ENCODE measurements at regions of chr17 and their contacts with region 1.

Region 1: DNA sequence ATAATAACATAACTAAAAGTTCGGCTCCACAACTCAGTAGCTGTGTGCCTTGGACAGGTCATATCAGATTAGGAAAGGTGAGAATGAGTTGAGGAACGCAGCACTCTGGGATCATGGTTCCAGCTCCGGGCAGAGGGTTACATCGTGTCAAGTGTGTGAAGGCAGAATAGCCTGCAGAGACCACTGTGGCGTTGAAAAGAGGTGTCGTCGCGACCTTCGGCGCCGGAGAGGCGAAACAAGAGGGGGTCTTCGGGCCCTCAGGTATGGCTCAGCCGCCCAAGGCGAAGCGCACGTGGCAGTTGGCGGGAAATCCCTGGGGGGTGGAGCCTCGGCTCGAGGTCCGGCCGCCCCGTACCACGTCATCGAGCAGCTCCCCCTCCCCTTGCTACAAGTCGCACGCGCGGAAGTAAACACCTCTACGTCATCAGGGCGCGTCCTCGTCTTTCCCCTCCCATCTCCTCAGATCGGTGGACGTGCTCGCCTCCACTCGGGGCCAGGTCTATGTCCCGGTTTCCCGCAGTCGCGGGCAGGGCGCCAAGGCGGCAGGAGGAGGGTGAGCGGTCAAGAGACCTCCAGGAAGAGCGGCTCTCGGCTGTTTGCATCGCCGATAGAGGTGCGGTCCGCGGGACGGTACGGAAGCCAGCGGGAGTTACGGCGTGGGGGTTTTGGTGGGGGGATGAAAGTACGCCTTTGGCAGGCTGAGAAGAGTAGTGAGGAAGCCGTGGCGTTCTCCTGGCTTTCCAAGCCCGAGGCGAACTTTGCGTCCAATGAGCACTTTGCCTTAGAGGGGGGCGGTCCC is at the start of gene DHX40:
- DNase-seq: peak; percentile 88
- ATAC-seq: peak; percentile 91
- H3K4me3 Mint-ChIP-seq: peak within 1 kb of the TSS; percentile 100
- H3K27ac Mint-ChIP-seq: peak within 1 kb of the TSS; percentile 99
- H3K4me1 Mint-ChIP-seq: peaks cover 17% of the 10 kb centered on the region
- H3K27me3 Mint-ChIP-seq: no peaks in the 10 kb centered on the region
- CTCF ChIP-seq: no peak
- total RNA-seq, gene DHX40: 19.1 and 22.6 TPM in 2 replicates

Region 2: DNA sequence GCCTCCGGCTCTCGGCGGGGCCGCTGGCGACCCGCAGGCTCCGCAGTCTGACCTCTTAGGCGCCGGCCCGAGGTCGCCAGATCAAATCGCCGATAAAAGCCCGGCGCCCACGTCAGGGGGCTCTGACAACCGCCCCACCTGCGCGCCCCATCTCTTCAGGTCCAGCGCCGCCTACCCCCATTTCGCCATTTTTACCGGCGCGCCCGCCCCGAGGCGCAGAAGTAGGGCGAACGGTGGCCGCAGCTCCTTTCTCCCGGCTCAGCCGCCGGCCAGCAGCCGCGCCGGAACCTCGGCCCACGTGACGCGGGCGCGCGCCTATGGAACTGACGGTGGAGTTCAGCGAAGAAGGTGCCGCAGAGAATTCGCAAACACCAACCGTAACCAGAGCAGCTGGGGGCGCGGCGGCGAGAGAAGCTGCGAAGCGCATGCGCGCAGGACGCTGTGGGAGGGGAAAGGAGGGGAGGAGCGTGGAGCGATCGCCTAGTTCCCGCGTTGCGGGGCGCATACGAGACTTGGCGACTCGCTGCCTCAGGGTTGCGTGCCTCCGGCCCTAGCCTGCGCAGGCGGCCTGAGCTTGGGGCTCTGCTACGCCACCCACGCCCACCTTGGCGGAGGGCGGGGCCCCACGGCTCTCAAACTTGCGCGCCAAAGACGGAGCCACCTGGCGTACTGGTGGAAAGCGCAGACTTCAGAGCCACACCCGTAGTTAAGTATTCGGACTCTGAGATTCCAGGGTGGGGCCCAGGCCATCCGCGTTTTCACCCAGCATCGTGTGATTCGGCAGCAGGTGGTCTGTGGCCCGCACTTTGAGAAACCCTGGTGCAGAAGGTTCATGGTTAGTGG is 458.7 kb before region 1 on chr17 and contains the start of gene TRIM37:
- CTCF ChIA-PET with region 1: no interaction called
- POLR2A ChIA-PET with region 1: no interaction called
- intact Hi-C with region 1: loop called (anchors 2 kb)
- DNase-seq: peak; percentile 98
- ATAC-seq: peak; percentile 96
- H3K4me3 Mint-ChIP-seq: peak within 1 kb of the TSS; percentile 94
- H3K27ac Mint-ChIP-seq: peak within 1 kb of the TSS; percentile 82
- H3K4me1 Mint-ChIP-seq: peaks cover 28% of the 10 kb centered on the region
- H3K27me3 Mint-ChIP-seq: no peaks in the 10 kb centered on the region
- CTCF ChIP-seq: no peak
- total RNA-seq, gene TRIM37: 16.4 and 17.3 TPM in 2 replicates

Region 3: DNA sequence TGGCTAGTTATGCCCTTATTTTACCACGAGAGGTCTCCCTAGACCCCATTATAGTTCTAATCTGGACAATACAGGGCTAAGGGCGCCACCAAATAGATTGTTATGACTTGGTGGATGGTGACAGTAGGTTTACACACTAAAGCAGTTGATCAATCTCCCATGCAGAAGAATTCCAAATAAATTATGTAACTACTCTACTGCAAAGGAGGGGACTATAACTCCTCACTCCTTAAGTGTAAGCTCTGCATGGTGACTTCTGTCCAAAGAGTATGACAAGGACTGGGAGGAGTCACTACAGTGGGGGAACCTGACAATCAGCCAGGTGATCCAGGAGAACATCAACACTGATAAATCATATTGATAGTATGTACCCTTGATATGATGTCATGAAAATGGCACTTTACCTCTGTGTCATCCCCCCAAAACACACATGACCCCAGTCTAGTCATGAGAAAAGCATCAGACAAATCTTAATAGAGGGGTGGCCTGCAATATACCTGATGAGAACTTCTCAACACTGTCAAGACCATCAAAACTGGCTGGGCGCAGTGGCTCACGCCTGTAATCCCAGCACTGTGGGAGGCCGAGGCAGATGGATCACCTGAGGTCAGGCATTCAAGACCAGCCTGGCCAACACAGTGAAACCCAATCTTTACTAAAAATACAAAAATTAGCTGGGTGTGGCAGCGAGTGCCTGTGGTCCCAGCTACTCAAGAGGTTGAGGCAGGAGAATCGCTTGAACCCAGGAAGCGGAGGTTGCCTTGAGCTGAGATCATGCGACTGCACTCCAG is 254.0 kb before region 1 on chr17:
- CTCF ChIA-PET with region 1: no interaction called
- POLR2A ChIA-PET with region 1: no interaction called
- intact Hi-C with region 1: loop called (anchors 5 kb)
- DNase-seq: no peak
- ATAC-seq: peak; percentile 99
- H3K4me3 Mint-ChIP-seq: no peak overlapping the region
- H3K27ac Mint-ChIP-seq: no peak overlapping the region
- H3K4me1 Mint-ChIP-seq: no peaks in the 10 kb centered on the region
- H3K27me3 Mint-ChIP-seq: no peaks in the 10 kb centered on the region
- CTCF ChIP-seq: peak; percentile 86

Region 4: DNA sequence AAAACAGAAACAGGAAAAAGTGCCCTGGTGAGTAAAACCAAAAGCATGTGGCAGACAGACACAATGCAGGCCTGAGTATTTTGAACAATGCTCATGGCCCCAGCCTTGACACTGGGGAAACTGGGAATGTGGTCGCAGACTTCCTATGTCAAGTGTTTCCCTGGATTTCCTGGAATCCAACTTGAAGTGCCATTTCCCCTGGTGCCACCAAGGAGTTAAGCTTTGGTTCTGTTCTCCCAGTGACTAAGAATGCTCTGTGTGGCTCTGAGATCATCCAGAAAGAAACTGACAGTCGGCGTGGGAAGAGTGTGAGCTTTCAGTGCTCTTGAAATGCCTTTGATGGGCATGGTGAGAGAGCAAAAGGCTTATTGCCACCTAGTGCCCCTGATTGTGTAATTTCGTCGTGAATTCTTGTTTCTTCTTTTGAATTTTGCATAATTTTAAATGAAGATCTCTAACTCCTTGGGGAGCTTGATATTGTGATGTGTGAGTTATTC is 137.9 kb before region 1 on chr17:
- CTCF ChIA-PET with region 1: no interaction called
- POLR2A ChIA-PET with region 1: interaction called, 10 read pairs
- intact Hi-C with region 1: no loop called
- DNase-seq: no peak
- ATAC-seq: no peak
- H3K4me3 Mint-ChIP-seq: no peak overlapping the region
- H3K27ac Mint-ChIP-seq: no peak overlapping the region
- H3K4me1 Mint-ChIP-seq: no peaks in the 10 kb centered on the region
- H3K27me3 Mint-ChIP-seq: no peaks in the 10 kb centered on the region
- CTCF ChIP-seq: no peak

Region 5: GRCh38 chr17:59601130-59601529 is 35.8 kb after region 1 on chr17:
- CTCF ChIA-PET with region 1: no interaction called
- POLR2A ChIA-PET with region 1: no interaction called
- intact Hi-C with region 1: no loop called
- DNase-seq: no peak
- ATAC-seq: no peak
- H3K4me3 Mint-ChIP-seq: no peak overlapping the region
- H3K27ac Mint-ChIP-seq: no peak overlapping the region
- H3K4me1 Mint-ChIP-seq: no peaks in the 10 kb centered on the region
- H3K27me3 Mint-ChIP-seq: no peaks in the 10 kb centered on the region
- CTCF ChIP-seq: no peak

Region 6: GRCh38 chr17:59707114-59707970 is 142.0 kb after region 1 on chr17 and contains the starts of genes PTRH2 and VMP1:
- CTCF ChIA-PET with region 1: no interaction called
- POLR2A ChIA-PET with region 1: interaction called, 13 read pairs
- intact Hi-C with region 1: loop called (anchors 5 kb)
- DNase-seq: peak; percentile 79
- ATAC-seq: peak; percentile 95
- H3K4me3 Mint-ChIP-seq: peak within 1 kb of the TSS; percentile 99
- H3K27ac Mint-ChIP-seq: peak within 1 kb of the TSS; percentile 97
- H3K4me1 Mint-ChIP-seq: peaks cover 72% of the 10 kb centered on the region
- H3K27me3 Mint-ChIP-seq: no peaks in the 10 kb centered on the region
- CTCF ChIP-seq: no peak
- total RNA-seq, gene PTRH2: 27.0 and 29.9 TPM in 2 replicates
- total RNA-seq, gene VMP1: 158 and 176 TPM in 2 replicates

Region 7: GRCh38 chr17:59892924-59893676 is 327.7 kb after region 1 on chr17 and contains the starts of genes RPS6KB1 and TUBD1:
- CTCF ChIA-PET with region 1: no interaction called
- POLR2A ChIA-PET with region 1: no interaction called
- intact Hi-C with region 1: loop called (anchors 1 kb)
- DNase-seq: peak; percentile 86
- ATAC-seq: peak; percentile 91
- H3K4me3 Mint-ChIP-seq: peak within 1 kb of the TSS; percentile 99
- H3K27ac Mint-ChIP-seq: peak within 1 kb of the TSS; percentile 98
- H3K4me1 Mint-ChIP-seq: peaks cover 44% of the 10 kb centered on the region
- H3K27me3 Mint-ChIP-seq: no peaks in the 10 kb centered on the region
- CTCF ChIP-seq: no peak
- total RNA-seq, gene RPS6KB1: 57.7 and 63.0 TPM in 2 replicates
- total RNA-seq, gene TUBD1: 10.5 and 15.1 TPM in 2 replicates

Region 8: DNA sequence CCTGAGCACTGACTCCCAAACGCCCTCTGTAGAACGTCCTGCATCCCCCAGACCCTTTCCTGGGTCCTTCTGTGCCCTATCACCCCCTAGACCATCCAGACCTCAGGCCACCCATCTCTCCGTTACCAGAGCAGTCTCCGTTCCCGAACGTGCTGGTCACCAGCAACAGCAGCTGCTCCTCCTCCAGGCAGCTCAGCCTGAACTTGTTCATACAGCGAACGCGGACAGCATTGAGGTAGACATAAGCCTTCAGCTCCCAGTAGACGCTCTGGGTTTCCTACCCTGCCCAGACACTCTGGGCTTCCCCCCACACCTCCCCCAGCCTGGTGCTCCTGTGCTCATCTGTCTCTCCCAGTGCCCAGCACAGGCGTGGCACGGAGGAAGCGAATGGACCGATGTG is 440.8 kb after region 1 on chr17:
- CTCF ChIA-PET with region 1: no interaction called
- POLR2A ChIA-PET with region 1: no interaction called
- intact Hi-C with region 1: no loop called
- DNase-seq: no peak
- ATAC-seq: no peak
- H3K4me3 Mint-ChIP-seq: no peak overlapping the region
- H3K27ac Mint-ChIP-seq: no peak overlapping the region
- H3K4me1 Mint-ChIP-seq: no peaks in the 10 kb centered on the region
- H3K27me3 Mint-ChIP-seq: no peaks in the 10 kb centered on the region
- CTCF ChIP-seq: no peak

Measured in activated B cell treated with CpG ODN at 0.5 μM for 24 hours (primary cell).